ENCODE measurements at regions of chr5 and their contacts with region 1.

Region 1: DNA sequence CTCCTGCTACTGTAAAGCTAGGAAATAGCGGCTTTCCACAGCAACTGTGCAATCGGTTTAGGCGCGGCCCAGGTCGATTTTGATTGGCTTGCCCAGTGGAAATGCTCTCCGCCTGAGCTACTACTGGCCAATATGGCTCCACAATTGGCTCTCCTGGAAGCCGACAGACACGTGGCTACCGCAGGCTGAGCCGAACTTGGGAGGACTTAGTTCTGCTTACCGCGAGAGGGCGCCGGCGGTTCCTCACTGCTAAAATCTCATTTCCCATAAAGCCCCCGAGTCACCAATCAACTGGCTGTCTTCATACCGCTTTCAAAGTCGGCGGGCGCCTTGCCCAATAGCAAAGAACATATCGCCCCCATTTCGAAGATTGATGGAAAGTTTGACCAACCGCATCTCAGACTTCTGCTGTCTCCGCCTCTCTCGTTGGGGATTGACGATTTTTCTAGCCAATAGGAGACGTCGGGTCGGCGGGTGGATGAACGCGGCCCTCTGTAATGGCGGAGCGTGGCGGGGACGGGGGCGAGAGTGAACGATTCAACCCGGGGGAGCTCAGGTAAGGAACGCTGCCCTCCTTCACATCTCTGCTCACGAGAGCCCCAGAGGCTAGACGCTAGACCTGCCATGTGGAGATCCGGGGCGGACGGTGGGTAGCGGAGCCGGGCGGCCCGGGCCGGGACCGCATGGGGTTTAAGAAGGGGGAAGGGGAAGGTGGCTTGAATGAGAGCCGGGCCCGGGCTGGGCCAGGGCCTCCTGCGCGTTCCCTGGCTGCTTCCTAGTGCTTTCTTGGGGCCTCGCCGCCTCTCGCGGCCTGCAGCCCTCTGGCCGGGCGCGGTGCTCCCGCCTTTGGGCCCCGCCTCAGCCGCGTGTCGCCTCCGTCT is at the start of gene TCERG1:
- DNase-seq: peak; percentile 99
- ATAC-seq: peak; percentile 98
- H3K4me3 ChIP-seq: peak within 1 kb of the TSS; percentile 70 to 93
- H3K27ac ChIP-seq: peak within 1 kb of the TSS; percentile 32 to 83
- H3K4me1 ChIP-seq: peaks cover 0 to 4% of the 10 kb centered on the region in 2 donors
- H3K27me3 ChIP-seq: no peaks in the 10 kb centered on the region
- total RNA-seq, gene TCERG1: 57.2 to 68.7 TPM

Region 2: GRCh38 chr5:146179696-146180095 is 267.4 kb before region 1 on chr5:
- intact Hi-C with region 1: loop called in 1 of 2 experiments (anchors 5 kb)
- DNase-seq: no peak
- ATAC-seq: no peak
- H3K4me3 ChIP-seq: no peak overlapping the region
- H3K27ac ChIP-seq: no peak overlapping the region
- H3K4me1 ChIP-seq: peaks cover 1 to 3% of the 10 kb centered on the region in 2 donors
- H3K27me3 ChIP-seq: no peaks in the 10 kb centered on the region

Region 3: DNA sequence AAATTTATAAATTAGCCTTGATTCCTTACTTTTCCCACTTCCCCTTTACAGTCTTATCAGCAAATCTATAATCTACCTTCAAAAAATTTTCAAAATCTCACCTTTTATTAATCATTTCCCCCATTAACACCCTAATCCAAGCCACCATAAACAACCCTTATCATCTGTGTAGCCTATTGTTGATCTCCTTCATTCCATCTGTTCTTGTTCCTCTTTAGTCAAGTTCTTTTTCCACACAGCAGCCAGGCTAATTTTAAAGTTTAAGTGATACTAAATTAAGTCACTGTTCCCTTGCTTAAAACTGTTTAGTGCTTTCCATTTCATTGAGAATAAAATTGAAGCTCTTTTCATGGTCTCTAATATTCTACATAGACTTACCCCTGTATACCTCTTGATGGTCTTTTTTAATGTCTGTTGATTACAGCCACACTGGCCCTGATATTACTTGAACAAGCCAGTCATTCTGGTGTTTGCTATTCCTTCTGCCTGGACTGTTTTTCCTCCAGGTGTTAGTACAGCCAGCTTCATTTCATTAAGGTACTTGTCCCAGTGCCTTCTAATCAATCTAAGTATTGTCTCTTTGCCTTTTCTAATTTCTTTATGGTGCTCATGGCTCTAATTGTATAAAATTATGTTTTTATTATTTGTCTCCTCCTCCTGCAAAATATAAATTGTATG is 37.8 kb after region 1 on chr5:
- intact Hi-C with region 1: no loop called
- DNase-seq: no peak
- ATAC-seq: no peak
- H3K4me3 ChIP-seq: no peak overlapping the region
- H3K27ac ChIP-seq: no peak overlapping the region
- H3K4me1 ChIP-seq: no peaks in the 10 kb centered on the region
- H3K27me3 ChIP-seq: no peaks in the 10 kb centered on the region

Region 4: DNA sequence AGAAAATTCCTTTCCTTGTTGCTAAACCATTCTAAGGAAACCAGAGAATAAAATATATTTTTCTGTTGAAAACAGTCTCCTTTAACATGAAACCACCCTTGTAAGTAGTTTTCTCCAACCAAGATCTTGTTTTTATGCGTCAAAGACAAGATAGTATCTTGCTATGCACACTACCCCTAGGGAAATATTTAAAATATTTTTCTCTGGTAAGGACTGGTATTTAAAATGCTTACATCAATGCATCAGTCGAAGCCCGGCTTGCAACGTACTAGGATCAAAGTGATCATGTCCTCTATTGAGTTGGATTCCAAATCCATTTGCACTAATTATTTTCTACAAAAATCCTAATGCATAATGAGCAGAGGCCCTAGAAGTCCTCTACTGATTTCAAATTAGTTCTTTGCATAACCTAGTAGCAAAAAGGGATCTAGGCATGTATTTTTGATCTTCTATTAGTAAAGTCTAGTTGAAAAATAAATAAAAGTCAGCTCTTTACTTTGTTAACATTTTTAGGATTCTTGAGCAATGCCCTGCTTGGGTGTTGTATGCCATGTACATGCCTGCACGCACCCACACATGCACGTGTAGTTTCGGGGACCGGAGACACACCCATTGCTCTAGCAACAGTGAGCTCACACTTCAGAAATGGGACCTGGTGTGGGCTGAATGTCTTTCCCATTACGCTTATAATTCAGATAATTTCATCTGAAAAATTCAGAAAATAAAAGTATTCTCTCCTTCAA is 233.9 kb after region 1 on chr5:
- intact Hi-C with region 1: no loop called
- DNase-seq: no peak
- ATAC-seq: no peak
- H3K4me3 ChIP-seq: no peak overlapping the region
- H3K27ac ChIP-seq: peak overlapping the region in 1 of 2 donors; percentile 67
- H3K4me1 ChIP-seq: peaks cover 2 to 5% of the 10 kb centered on the region in 2 donors
- H3K27me3 ChIP-seq: no peaks in the 10 kb centered on the region